ENCODE measurements at regions of chr10 and their contacts with region 1.

Region 1: DNA sequence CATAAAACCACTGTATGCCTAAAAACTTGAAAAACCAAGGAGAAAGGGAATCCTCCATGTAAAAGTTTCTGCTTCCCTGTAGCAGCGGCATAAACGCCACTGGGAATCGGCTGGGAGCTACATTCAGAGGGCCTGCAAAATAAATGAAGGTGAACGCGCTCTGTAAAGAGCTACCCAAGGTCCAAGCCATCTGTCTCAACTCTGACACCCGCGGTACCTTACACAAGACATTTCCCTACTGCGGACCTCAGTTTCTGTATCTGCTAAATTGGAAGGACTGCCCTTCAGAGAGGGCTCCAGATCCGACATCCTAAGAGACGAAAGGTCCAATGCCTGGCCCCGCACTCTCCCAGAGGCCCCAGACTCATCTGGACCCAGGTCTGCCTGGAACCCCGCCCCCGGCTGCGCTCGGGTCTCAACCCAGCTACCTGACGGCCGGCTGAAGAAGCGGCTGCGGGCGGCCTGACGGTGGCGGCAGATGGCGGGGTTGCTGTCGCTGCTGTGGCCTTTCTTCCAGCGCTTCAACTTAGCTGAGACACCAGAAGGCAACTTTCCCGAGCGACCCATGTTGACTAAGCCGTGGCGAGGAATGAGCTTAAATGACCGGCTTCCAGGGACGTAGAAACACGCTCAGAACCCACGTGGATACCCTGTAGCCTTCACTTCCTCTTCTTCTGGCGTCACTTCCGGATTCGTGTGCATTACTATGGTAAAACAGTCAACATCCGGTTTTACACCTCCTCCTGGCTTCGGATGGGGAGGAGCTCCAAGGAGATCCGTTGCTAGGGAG is at the start of gene RRP12:
- DNase-seq: peak; percentile 94
- ATAC-seq: peak; percentile 88
- H3K4me3 Mint-ChIP-seq: peak within 1 kb of the TSS; percentile 96
- H3K27ac Mint-ChIP-seq: peak within 1 kb of the TSS; percentile 93
- H3K4me1 Mint-ChIP-seq: peaks cover 15% of the 10 kb centered on the region
- H3K27me3 Mint-ChIP-seq: no peaks in the 10 kb centered on the region
- total RNA-seq, gene RRP12: 30.7 to 38.1 TPM

Region 2: DNA sequence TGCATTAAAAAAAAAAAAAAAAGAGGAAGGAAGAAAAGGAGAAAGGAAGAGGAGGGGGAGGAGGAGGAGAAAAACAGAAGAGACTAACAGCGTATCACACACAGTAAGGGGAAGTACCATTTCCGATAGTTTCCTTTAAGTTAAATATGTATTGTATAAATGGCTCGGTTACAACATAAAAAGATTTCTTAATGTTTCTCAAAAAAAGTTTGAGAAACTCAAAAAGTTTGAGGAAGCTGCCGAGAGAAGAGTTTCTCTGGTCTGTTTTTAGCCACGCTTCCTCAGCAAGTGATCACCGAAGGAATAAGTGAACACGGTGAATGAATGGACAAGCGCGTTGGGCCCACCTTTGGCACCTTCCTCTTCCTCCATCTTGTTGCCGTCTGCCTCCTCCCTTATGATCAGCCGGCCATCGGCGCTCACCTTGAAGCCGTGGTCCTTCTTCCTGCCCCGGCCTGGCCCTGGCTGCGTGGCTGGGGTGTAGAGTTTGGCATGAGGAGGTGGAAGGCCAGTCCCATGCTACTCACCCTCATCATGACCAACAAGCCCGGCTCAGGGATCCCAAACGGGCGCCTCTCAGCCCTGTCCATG is 35.0 kb before region 1 on chr10:
- CTCF ChIA-PET with region 1: no interaction called
- DNase-seq: no peak
- ATAC-seq: no peak
- H3K4me3 Mint-ChIP-seq: no peak overlapping the region
- H3K27ac Mint-ChIP-seq: no peak overlapping the region
- H3K4me1 Mint-ChIP-seq: no peaks in the 10 kb centered on the region
- H3K27me3 Mint-ChIP-seq: no peaks in the 10 kb centered on the region

Region 3: DNA sequence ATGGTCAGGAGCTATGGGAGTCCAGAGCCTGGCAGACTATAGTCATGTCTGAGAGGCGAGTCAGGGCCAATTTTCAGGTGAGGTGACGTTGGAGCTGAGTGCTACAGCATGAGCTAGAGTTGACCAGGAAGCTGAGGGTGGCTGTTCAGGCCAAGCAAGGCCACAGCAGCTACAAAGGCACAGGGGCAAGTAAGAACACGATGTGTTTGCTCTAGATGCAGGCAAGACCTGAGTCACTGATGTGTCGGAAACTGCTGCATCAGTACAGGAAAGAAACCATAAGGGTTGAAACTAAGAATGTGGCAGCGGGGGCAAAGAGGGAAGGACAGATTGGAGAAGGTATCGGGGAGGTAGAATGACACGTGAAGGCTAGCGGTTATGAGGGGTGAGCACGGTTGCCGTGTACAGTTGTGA is 12.0 kb after region 1 on chr10:
- CTCF ChIA-PET with region 1: interaction called, 53 read pairs
- DNase-seq: peak; percentile 83
- ATAC-seq: peak; percentile 50
- H3K4me3 Mint-ChIP-seq: peak overlapping the region; percentile 56
- H3K27ac Mint-ChIP-seq: peak overlapping the region; percentile 88
- H3K4me1 Mint-ChIP-seq: peaks cover 59% of the 10 kb centered on the region
- H3K27me3 Mint-ChIP-seq: no peaks in the 10 kb centered on the region

Region 4: DNA sequence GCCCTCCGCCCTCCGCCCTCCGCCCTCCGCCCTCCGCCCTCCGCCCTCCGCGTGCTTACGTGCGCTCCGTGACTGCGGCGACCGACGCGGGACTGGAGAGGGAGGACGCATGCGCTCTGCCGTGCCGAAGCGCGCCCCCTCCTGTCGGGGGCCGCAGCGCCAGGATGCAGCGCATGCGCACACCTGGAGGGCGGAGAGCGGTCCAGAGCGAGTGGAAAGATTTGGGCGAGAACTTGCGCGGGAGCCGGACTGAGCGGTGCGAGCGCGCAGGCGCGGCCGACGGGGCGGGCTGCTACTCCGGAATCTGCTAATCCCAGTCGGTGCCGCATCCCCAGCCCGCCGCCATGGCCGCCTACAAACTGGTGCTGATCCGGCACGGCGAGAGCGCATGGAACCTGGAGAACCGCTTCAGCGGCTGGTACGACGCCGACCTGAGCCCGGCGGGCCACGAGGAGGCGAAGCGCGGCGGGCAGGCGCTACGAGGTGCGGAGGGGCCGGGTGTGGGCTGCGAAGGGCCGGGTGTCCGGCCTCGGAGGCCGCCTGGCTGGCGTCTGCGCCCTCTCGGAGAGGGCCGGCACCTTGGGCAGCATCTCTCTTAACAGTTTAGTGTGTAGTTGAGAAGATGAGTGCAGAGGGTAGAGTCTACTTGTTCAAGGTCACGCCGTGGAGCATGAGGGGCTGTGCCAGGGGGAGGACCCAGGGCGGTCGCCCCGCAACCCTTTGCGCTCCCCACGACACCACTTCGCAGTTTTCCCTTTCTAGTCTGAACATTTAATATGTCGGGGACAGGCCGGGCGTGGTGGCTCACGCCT is 25.3 kb after region 1 on chr10 and contains the start of gene PGAM1:
- CTCF ChIA-PET with region 1: interaction called, 19 read pairs
- DNase-seq: peak; percentile 97
- ATAC-seq: peak; percentile 85
- H3K4me3 Mint-ChIP-seq: peak within 1 kb of the TSS; percentile 87
- H3K27ac Mint-ChIP-seq: peak within 1 kb of the TSS; percentile 93
- H3K4me1 Mint-ChIP-seq: peaks cover 46% of the 10 kb centered on the region
- H3K27me3 Mint-ChIP-seq: no peaks in the 10 kb centered on the region
- total RNA-seq, gene PGAM1: 459 to 582 TPM

Region 5: DNA sequence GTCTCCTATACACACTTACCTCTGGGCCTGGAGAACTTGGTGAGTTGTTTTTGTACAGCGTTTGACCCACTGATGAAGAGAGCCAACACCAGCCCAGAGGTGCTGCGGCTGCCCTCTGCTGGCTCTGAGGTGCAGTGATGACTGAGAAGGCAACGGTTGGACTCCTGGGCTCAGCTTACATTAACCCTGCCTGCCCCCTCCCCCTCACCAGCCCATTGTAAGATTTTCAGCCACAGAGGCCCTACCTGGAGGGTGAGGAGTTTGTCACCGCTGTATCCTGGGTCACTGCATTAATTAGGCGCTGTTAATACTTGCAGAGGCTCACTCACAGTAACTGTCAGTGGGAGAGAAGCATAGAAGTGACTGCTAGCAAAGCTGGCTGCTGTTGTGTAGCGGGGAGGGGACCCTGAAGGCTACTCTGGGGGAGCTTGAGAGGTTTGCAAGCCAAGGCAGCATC is 152.7 kb after region 1 on chr10:
- CTCF ChIA-PET with region 1: interaction called, 36 read pairs
- DNase-seq: peak; percentile 66
- ATAC-seq: peak; percentile 98
- H3K4me3 Mint-ChIP-seq: no peak overlapping the region
- H3K27ac Mint-ChIP-seq: no peak overlapping the region
- H3K4me1 Mint-ChIP-seq: peaks cover 1% of the 10 kb centered on the region
- H3K27me3 Mint-ChIP-seq: peaks cover 3% of the 10 kb centered on the region